OCI-LY7 (cell line): ENCODE measurements at regions of chr3 and their contacts with region 1.

Region 1: DNA sequence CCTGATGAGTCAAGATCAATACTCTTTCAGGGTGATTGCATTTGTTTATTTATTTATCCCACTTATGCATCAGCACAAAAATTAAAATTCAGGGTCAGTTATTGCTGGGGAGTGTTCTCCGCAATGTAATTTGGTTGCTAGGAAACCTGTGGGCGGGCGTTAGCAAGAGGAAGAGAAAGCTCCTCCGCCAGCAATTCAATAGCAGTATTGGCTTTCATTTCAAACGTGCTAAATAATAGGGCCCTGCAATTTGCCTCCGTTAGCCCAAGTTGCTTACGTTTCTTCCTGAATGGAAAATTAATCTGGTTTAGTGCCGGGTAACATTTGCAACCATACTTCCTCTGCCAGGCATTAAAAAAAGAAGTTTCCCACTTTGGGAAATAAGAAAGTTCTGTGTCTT is 35.5 kb upstream of the PLCL2 start:
- DNase-seq: peak; percentile 57
- H3K4me3 ChIP-seq: no peak overlapping the region
- H3K27ac ChIP-seq: no peak overlapping the region
- H3K4me1 ChIP-seq: peaks cover 8% of the 10 kb centered on the region
- CTCF ChIP-seq: no peak

Region 2: DNA sequence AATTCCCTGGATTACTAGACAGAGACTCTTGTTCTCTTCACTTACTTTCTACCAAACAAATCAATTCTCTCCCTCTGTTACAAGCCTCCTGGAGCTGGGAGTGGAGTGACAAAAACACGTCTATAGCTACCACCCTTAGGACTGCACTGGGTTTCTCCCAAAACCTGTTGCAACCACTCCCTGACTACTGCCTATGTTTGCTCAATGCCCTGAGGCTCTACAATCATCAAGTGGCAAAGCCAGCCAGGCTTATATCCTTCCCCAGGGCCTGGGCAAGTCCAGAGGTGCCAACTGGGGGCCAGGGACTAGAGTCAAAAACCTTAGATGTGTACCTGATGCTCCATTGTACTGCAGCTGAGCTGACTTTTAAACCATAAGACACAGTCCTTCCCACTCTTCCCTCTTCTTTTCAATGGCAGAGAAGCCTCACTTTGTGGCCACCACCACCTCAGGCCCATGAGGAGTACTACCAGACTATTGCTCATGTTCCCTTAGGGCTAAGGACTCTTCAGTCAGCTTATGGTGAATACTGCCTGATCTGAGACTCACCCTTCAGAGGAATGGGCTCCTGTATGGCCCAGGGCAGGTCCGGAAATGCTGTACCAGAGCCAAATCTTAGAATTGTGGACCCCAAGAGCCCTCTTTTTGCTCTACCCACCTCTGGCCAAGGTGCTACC is 89.9 kb before region 1 on chr3:
- CTCF ChIA-PET with region 1: no interaction called
- POLR2A ChIA-PET with region 1: no interaction called
- intact Hi-C with region 1: no loop called
- DNase-seq: no peak
- H3K4me3 ChIP-seq: no peak overlapping the region
- H3K27ac ChIP-seq: no peak overlapping the region
- H3K4me1 ChIP-seq: no peaks in the 10 kb centered on the region
- CTCF ChIP-seq: no peak

Region 3: GRCh38 chr3:16866571-16866970 is 17.3 kb after region 1 on chr3:
- CTCF ChIA-PET with region 1: no interaction called
- POLR2A ChIA-PET with region 1: interaction called, 20 read pairs
- intact Hi-C with region 1: no loop called
- DNase-seq: peak; percentile 16
- H3K4me3 ChIP-seq: no peak overlapping the region
- H3K27ac ChIP-seq: no peak overlapping the region
- H3K4me1 ChIP-seq: peaks cover 32% of the 10 kb centered on the region
- CTCF ChIP-seq: no peak